Uterus (tissue), 4 donors: ENCODE measurements at regions of chr4 and their contacts with region 1.

Region 1: DNA sequence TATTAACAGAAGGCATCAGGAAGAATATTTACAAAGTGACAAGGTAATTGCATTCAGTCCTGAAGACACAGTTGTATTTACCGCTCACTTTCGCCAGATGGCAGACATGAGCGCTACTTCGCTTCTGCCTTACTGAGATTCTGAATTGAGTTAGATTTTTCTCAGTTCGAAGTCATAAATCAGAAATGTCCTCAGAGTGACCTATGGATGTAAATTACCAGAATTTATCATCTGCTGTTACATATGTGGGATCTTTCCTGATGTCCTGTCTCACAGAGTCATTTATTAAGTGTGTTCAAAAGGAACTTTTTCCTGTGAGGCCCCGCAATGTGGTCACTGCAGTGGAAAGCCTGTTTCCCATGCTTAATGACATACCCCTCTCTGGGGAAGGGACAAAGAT is 97.3 kb upstream of the DCLK2 start:
- DNase-seq: peak; percentile 27 to 44
- H3K4me3 ChIP-seq: no peak overlapping the region
- H3K27ac ChIP-seq: no peak overlapping the region
- H3K4me1 ChIP-seq: no peaks in the 10 kb centered on the region
- H3K27me3 ChIP-seq: no peaks in the 10 kb centered on the region
- CTCF ChIP-seq: peak; percentile 55 to 74 (median 68)
- POLR2A ChIP-seq: no peak

Region 2: GRCh38 chr4:150867148-150867547 is 886.2 kb after region 1 on chr4:
- intact Hi-C with region 1: loop called (anchors 10 kb)
- DNase-seq: peak in 1 of 2 donors; percentile 24
- H3K4me3 ChIP-seq: no peak overlapping the region
- H3K27ac ChIP-seq: no peak overlapping the region
- H3K4me1 ChIP-seq: no peaks in the 10 kb centered on the region
- H3K27me3 ChIP-seq: no peaks in the 10 kb centered on the region
- CTCF ChIP-seq: peak; percentile 51 to 64 (median 57)
- POLR2A ChIP-seq: no peak